ENCODE measurements at regions of chr10 and their contacts with region 1.

Region 1: DNA sequence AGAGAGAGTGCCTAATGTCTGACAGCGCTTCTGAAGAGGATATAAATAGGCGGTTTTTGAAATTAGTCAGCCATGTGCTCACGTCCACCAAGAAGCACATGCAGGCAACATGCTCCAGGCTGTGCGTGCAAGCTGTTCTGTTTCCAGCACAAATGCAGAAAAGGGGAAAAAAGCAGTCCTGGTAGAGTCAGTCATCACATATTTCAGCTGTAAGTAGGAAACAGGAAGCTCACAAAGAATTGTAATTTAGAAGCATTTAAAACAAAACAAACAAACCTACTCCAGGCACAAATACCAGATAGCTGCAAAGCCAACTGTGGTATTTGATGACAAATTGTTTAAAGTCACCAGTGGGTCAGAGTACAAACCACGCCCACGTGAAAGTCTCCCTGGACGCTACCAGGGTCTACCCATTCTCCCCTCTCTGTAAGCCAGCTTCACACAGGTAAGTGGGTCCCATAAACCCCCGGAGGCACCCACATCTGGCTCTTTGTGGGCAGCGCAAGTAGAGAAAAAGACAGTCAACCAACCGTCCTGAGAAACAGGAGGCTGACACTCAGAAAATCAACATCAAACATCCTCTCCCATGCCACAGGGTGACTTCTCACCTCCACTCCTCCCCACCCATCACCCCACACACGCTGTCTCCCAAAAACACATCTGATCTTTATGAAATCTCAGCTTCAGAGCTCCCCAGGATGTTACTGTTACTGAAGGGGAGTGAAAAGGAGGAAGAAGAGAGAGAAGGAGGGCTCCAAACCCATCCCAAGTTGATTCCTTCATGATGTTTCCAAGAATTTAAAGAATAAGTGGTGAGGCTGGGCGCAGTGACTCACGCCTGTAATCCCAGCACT is 186.4 kb downstream of the FAM107B start:
- DNase-seq: peak; percentile 60 to 94
- H3K4me3 ChIP-seq: peak overlapping the region; percentile 32; the same call in 1 of the 2 replicates
- H3K27ac ChIP-seq: peak overlapping the region; percentile 97
- H3K4me1 ChIP-seq: peaks cover 80% of the 10 kb centered on the region
- H3K27me3 ChIP-seq: no peaks in the 10 kb centered on the region
- CTCF ChIP-seq: no peak

Region 2: GRCh38 chr10:14536241-14537213 is 51.8 kb before region 1 on chr10:
- CTCF ChIA-PET with region 1: no interaction called
- POLR2A ChIA-PET with region 1: interaction called, 7 read pairs
- intact Hi-C with region 1: loop called (anchors 2 kb)
- DNase-seq: peak in 1 of 2 experiments; percentile 65
- H3K4me3 ChIP-seq: no peak overlapping the region
- H3K27ac ChIP-seq: no peak overlapping the region
- H3K4me1 ChIP-seq: peaks cover 8% of the 10 kb centered on the region; the same call in 1 of the 2 replicates
- H3K27me3 ChIP-seq: no peaks in the 10 kb centered on the region
- CTCF ChIP-seq: peak; percentile 68

Region 3: DNA sequence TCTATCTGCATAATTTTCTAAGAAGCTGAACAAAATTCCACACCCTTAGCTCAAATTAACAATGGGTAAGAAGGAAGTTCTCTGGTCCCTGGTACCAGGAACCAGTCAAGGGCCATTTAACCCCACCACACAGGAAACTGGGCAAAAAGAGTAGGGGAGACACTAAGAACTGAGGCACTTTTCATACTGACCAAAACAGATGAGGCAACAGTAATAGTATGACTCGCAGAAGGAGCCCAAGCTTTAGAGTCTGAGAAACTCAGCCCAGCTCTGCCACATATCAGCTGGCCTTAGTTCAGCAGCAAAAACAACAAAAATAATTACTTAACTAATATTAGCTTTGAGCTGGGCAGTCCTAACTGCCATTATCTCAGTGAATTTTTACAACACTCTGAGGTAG is 34.9 kb before region 1 on chr10:
- CTCF ChIA-PET with region 1: no interaction called
- POLR2A ChIA-PET with region 1: interaction called, 3 read pairs
- intact Hi-C with region 1: loop called (anchors 5 kb)
- DNase-seq: no peak
- H3K4me3 ChIP-seq: no peak overlapping the region
- H3K27ac ChIP-seq: peak overlapping the region; percentile 69
- H3K4me1 ChIP-seq: peaks cover 59% of the 10 kb centered on the region
- H3K27me3 ChIP-seq: no peaks in the 10 kb centered on the region
- CTCF ChIP-seq: no peak

Region 4: GRCh38 chr10:14578060-14578952 is 10.0 kb before region 1 on chr10:
- CTCF ChIA-PET with region 1: no interaction called
- POLR2A ChIA-PET with region 1: interaction called, 13 read pairs
- intact Hi-C with region 1: loop called (anchors 1 kb)
- DNase-seq: peak; percentile 66 to 97
- H3K4me3 ChIP-seq: peak overlapping the region; percentile 46
- H3K27ac ChIP-seq: peak overlapping the region; percentile 95
- H3K4me1 ChIP-seq: peaks cover 88% of the 10 kb centered on the region
- H3K27me3 ChIP-seq: no peaks in the 10 kb centered on the region
- CTCF ChIP-seq: no peak

Measured in PC-9 (cell line).